HAP-1 (cell line): ENCODE measurements at regions of chr14 and their contacts with region 1.

Region 1: DNA sequence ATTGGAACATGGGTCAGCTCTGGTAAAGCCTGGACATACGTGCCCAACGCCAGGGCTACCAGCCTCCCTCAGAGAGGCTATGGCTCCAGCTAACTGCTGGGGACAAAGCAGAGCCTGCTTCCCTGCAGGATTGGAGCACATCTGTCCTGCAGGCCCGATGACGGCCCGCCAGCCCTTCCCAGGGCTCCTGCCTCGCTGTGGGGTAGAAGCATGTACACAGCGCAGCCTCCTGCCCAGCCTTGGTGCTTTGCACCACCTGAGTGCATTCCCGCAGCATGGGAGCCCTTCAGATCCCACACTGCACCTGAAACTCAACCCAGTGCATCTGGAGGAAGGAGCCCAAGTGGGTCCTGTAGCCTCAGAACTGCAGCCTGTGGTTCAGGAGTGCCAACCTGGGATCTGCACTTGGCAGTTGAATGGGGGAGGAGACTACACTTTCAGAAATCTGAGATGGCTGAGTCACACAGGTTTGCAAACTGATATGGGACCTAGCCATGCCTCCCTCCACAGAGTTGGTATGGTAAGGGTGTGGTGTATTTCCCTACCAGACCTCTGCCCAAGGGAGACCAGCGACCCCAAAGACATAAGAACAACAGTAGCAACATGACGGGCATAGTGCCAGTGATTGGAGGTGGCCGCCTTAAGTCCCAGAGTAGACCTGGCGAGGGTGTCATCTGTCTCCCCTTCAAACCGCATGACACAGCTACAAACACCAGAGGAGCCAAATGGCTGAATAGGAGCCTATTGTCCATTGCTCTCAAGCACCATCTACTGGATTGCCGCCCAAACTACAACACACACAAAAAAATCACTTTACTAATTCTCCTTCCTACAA is 273.9 kb upstream of the MIS18BP1 start:
- DNase-seq: peak; percentile 38 to 59
- H3K4me3 ChIP-seq: no peak overlapping the region
- H3K4me1 ChIP-seq: no peaks in the 10 kb centered on the region
- H3K27me3 ChIP-seq: no peaks in the 10 kb centered on the region

Region 2: GRCh38 chr14:45284802-45285201 is 242.1 kb before region 1 on chr14:
- in situ Hi-C with region 1: loop called (anchors 25 kb)
- DNase-seq: no peak
- H3K4me3 ChIP-seq: no peak overlapping the region
- H3K4me1 ChIP-seq: no peaks in the 10 kb centered on the region
- H3K27me3 ChIP-seq: peaks cover 23% of the 10 kb centered on the region